Activated CD4-positive, alpha-beta T cell treated with anti-CD3 and anti-CD28 coated beads for 36 hours (primary cell): ENCODE measurements at regions of chr11 and their contacts with region 1.

Region 1: DNA sequence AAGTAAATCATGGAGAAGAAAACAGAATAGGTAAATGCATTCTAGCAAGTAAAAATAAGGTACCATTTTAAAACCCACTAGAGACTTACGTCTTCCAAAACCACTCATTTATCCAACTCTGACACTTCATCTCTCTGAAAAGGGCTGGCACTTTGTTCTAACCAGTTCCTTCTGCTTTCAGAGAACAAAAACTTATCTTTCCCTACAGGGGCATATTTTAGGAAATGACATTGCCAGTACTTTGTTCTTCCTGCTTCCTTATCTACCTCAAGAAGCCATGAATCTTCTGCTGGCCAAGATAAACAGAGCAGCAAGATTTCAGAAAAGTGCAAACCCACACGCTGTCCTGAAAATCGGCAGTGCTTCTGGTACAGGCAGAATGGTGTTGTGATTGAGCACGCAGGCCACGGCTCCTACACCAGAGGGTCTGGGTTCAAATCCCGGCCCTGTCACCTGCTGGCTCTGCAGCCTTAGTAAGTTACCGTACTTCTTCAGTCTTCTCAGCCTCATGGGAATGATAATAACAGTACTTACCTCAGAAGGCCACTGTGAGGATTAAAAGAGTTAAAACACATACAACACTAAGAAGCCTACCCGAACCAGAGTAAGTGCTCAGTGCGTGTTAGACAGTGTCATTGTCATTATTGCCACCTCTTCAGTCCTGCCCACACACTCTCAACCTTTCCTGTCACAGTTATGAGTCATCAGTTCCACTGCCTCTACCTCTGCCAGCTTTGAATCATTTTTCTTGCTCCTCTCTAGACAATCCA is 11.0 kb downstream of the MPZL3 start:
- DNase-seq: peak; percentile 82
- ATAC-seq: peak; percentile 87
- H3K4me3 Mint-ChIP-seq: peak overlapping the region; percentile 77
- H3K27ac Mint-ChIP-seq: peak overlapping the region; percentile 94
- H3K4me1 Mint-ChIP-seq: peaks cover 88% of the 10 kb centered on the region
- H3K27me3 Mint-ChIP-seq: no peaks in the 10 kb centered on the region

Region 2: GRCh38 chr11:118002541-118003423 is 238.4 kb before region 1 on chr11:
- CTCF ChIA-PET with region 1: no interaction called
- POLR2A ChIA-PET with region 1: no interaction called
- intact Hi-C with region 1: loop called (anchors 2 to 5 kb)
- DNase-seq: peak; percentile 85
- ATAC-seq: peak; percentile 67
- H3K4me3 Mint-ChIP-seq: peak overlapping the region; percentile 38
- H3K27ac Mint-ChIP-seq: peak overlapping the region; percentile 97
- H3K4me1 Mint-ChIP-seq: peaks cover 94% of the 10 kb centered on the region
- H3K27me3 Mint-ChIP-seq: no peaks in the 10 kb centered on the region

Region 3: DNA sequence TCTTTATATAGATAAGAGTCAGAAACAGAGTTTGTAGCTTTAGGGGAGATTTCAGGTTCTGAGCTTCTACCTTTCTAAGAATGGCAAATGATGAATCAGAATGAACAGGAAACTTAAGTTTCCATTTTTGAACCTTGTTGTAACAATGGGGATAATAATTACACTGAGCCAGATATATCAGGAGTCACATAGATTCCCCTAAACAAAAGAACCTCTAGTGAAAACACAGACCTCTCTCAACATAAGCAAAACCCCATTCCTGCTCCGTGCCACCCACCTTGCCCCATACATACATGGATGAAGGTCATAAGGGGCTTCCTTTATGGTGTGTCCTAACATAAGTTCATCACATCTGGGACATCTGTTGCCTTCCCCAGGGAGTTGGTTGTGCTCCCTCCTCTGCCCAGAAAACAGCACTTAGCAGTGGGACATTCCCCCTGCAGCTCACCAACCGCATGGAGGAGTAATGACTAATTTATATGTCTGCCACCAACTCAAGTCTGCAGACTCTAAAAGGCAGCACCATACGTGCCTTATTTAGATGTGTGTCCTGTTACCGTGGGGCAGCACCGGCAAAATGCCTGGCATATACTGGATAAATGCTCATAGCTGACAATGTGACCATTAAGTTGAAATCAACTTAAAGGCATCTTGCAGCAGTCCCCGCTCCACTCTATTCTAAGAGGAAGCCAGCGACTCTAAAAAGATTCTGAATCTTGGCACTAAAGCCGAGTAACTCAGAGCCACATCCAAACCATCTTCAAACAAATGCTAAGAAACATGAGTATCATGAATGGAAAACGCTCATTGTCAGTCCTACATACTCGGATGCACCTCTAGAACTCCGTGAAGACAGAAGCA is 24.3 kb before region 1 on chr11:
- CTCF ChIA-PET with region 1: interaction called, 14 read pairs
- POLR2A ChIA-PET with region 1: interaction called, 23 read pairs
- intact Hi-C with region 1: loop called (anchors 1 kb)
- DNase-seq: peak; percentile 76
- ATAC-seq: peak; percentile 73
- H3K4me3 Mint-ChIP-seq: peak overlapping the region; percentile 76
- H3K27ac Mint-ChIP-seq: peak overlapping the region; percentile 100
- H3K4me1 Mint-ChIP-seq: peaks cover 97% of the 10 kb centered on the region
- H3K27me3 Mint-ChIP-seq: no peaks in the 10 kb centered on the region

Region 4: GRCh38 chr11:118251858-118252652 is 10.9 kb after region 1 on chr11 and contains the start of gene MPZL3:
- CTCF ChIA-PET with region 1: interaction called, 3 read pairs
- POLR2A ChIA-PET with region 1: interaction called, 10 read pairs
- intact Hi-C with region 1: no loop called
- DNase-seq: peak; percentile 90
- ATAC-seq: peak; percentile 65
- H3K4me3 Mint-ChIP-seq: peak within 1 kb of the TSS; percentile 82
- H3K27ac Mint-ChIP-seq: peak within 1 kb of the TSS; percentile 96
- H3K4me1 Mint-ChIP-seq: peaks cover 36% of the 10 kb centered on the region
- H3K27me3 Mint-ChIP-seq: no peaks in the 10 kb centered on the region
- total RNA-seq, gene MPZL3: 45.9 to 53.2 TPM

Region 5: DNA sequence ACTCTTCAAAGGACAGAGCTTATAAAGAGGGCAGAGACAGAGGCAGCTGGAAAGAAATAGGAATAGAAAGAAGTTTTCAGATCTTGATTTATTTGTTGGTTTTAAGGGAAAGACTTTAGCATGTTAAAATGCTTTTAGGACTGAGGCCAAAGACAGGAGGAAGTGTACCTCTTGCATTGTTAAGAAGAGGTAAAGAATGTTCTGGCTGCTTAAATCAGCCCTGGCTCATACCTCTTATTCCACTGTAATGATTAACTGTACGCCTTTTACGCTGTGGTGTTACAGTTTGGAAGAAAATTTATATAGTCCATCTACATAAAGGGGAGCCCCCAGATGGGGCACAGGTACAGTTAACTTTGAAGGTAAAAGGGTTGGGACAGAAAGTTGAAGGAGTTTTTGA is 33.0 kb after region 1 on chr11:
- CTCF ChIA-PET with region 1: no interaction called
- POLR2A ChIA-PET with region 1: no interaction called
- intact Hi-C with region 1: no loop called
- DNase-seq: no peak
- ATAC-seq: no peak
- H3K4me3 Mint-ChIP-seq: no peak overlapping the region
- H3K27ac Mint-ChIP-seq: no peak overlapping the region
- H3K4me1 Mint-ChIP-seq: peaks cover 37% of the 10 kb centered on the region
- H3K27me3 Mint-ChIP-seq: no peaks in the 10 kb centered on the region

Region 6: DNA sequence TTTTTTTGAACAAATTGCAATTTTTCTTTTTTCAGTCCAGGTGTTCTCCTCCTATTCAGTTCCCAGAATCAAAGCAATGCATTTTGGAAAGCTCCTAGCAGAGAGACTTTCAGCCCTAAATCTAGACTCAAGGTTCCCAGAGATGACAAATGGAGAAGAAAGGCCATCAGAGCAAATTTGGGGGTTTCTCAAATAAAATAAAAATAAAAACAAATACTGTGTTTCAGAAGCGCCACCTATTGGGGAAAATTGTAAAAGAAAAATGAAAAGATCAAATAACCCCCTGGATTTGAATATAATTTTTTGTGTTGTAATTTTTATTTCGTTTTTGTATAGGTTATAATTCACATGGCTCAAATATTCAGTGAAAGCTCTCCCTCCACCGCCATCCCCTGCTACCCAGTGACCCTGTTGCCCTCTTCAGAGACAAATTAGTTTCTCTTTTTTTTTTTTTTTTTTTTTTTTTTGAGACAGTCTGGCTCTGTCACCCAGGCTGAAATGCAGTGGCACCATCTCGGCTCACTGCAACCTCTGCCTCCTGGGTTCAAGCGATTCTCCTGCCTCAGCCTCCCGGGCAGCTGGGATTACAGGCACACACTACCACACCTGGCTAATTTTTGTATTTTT is 112.0 kb after region 1 on chr11:
- CTCF ChIA-PET with region 1: no interaction called
- POLR2A ChIA-PET with region 1: no interaction called
- intact Hi-C with region 1: no loop called
- DNase-seq: no peak
- ATAC-seq: no peak
- H3K4me3 Mint-ChIP-seq: no peak overlapping the region
- H3K27ac Mint-ChIP-seq: no peak overlapping the region
- H3K4me1 Mint-ChIP-seq: peaks cover 28% of the 10 kb centered on the region
- H3K27me3 Mint-ChIP-seq: no peaks in the 10 kb centered on the region

Region 7: DNA sequence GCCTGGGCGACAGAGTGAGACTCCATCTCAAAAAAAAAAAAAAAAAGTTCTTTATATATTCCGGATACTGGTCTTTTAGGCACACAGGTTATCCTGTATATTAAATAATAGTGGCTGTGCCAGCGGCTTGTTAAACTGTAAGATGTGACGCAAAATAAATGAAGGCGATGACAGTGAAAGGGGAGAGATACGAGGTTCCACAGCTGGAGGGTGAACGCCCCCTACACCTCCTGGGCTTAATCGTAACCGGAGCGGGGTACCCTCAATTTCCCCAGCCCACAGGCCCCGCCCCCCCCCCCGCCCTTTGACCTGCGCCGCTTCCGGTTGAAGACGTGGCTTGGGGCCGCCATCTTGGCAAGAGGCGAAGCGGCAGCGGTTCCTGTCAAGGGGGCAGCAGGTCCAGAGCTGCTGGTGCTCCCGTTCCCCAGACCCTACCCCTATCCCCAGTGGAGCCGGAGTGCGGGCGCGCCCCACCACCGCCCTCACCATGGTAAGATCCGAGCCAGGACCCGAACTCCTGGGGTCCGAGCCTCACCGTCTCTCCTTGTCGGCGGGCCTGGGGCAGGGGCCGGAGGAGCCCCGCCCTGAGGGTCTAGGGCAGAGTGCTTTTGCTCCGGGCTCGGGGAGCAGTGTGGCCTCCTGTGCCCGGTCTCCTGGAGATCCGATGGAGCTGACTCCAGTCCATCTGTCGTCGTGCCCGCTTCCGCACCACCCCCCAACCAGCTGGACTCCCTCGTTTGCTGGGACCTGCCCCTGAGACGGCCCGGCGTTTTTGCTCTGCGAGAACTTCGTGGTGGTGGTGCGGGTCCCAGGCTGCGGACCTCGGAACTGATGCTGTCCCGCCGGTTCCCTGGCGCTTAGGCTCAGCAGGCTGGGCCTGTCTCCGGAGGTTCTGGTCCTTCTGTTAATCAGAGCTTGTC is 331.1 kb after region 1 on chr11 and contains the start of gene ARCN1:
- CTCF ChIA-PET with region 1: no interaction called
- POLR2A ChIA-PET with region 1: no interaction called
- intact Hi-C with region 1: loop called in 1 of 2 experiments (anchors 5 kb)
- DNase-seq: peak; percentile 88
- ATAC-seq: peak; percentile 80
- H3K4me3 Mint-ChIP-seq: peak within 1 kb of the TSS; percentile 89
- H3K27ac Mint-ChIP-seq: peak within 1 kb of the TSS; percentile 96
- H3K4me1 Mint-ChIP-seq: peaks cover 44% of the 10 kb centered on the region
- H3K27me3 Mint-ChIP-seq: no peaks in the 10 kb centered on the region
- total RNA-seq, gene ARCN1: 148 to 154 TPM